Right cardiac atrium (tissue), 5 donors: ENCODE measurements at regions of chr10 and their contacts with region 1.

Region 1: DNA sequence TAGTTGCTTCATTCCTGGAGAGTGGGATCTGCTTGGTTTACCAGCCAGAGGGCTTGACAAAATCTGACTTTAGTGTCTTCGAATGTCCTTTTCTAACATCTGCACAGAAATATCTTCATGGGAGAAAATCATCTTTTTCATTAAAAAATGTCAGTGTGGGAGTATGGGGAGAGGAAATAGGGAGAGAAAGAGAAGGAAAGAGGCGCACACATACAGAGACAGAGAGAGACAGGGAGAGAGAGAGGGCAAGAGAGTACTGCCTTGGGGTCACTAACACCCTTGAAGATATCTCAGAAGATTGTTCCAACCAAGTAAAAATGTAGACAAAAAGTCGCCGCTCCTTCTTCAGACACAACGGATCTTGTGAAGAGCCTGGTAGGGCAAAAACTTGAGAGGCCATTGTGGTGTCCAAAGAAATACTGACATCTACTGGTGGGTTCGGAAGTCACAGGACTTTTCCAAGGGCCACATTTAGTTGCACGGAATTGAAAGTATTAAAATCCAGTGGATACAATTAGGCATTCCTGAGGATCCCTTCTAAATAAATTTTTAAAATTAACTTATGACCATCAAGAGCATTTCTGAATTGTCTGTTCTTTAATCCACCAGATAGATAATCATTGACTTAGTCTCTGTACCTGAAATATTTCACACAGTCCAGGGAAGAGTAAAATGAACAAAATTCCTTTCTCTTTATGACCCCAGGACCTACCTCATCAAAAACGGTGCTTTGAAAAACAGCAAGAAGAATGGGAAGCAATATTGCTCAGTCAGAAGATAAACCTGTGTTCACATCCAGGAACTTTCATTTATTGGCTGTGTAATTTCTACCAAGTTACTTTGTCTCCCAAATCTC is 29.7 kb downstream of the VIM start:
- DNase-seq: no peak
- ATAC-seq: peak; percentile 87
- H3K4me3 ChIP-seq: peak overlapping the region; percentile 26
- H3K27ac ChIP-seq: no peak overlapping the region
- H3K4me1 ChIP-seq: no peaks in the 10 kb centered on the region
- H3K27me3 ChIP-seq: no peaks in the 10 kb centered on the region

Region 2: GRCh38 chr10:16828114-16828568 is 429.6 kb before region 1 on chr10:
- intact Hi-C with region 1: loop called in 2 of 4 experiments (anchors 5 kb)
- DNase-seq: peak; percentile 45 to 65 (median 62)
- ATAC-seq: peak; percentile 87 to 88
- H3K4me3 ChIP-seq: peak overlapping the region; percentile 23
- H3K27ac ChIP-seq: peak overlapping the region; percentile 58
- H3K4me1 ChIP-seq: peaks cover 6% of the 10 kb centered on the region
- H3K27me3 ChIP-seq: no peaks in the 10 kb centered on the region

Region 3: GRCh38 chr10:16843252-16843870 is 414.3 kb before region 1 on chr10:
- intact Hi-C with region 1: loop called in 3 of 4 experiments (anchors 5 kb)
- DNase-seq: no peak
- ATAC-seq: peak; percentile 65 to 79
- H3K4me3 ChIP-seq: no peak overlapping the region
- H3K27ac ChIP-seq: no peak overlapping the region
- H3K4me1 ChIP-seq: no peaks in the 10 kb centered on the region
- H3K27me3 ChIP-seq: no peaks in the 10 kb centered on the region

Region 4: GRCh38 chr10:17144757-17145156 is 112.9 kb before region 1 on chr10:
- intact Hi-C with region 1: no loop called
- DNase-seq: no peak
- ATAC-seq: no peak
- H3K4me3 ChIP-seq: no peak overlapping the region
- H3K27ac ChIP-seq: no peak overlapping the region
- H3K4me1 ChIP-seq: no peaks in the 10 kb centered on the region
- H3K27me3 ChIP-seq: no peaks in the 10 kb centered on the region

Region 5: GRCh38 chr10:17169803-17170202 is 87.9 kb before region 1 on chr10:
- intact Hi-C with region 1: no loop called
- DNase-seq: no peak
- ATAC-seq: peak; percentile 57 to 62
- H3K4me3 ChIP-seq: no peak overlapping the region
- H3K27ac ChIP-seq: no peak overlapping the region
- H3K4me1 ChIP-seq: no peaks in the 10 kb centered on the region
- H3K27me3 ChIP-seq: no peaks in the 10 kb centered on the region